ENCODE measurements at regions of chr1 and their contacts with region 1.

Region 1: DNA sequence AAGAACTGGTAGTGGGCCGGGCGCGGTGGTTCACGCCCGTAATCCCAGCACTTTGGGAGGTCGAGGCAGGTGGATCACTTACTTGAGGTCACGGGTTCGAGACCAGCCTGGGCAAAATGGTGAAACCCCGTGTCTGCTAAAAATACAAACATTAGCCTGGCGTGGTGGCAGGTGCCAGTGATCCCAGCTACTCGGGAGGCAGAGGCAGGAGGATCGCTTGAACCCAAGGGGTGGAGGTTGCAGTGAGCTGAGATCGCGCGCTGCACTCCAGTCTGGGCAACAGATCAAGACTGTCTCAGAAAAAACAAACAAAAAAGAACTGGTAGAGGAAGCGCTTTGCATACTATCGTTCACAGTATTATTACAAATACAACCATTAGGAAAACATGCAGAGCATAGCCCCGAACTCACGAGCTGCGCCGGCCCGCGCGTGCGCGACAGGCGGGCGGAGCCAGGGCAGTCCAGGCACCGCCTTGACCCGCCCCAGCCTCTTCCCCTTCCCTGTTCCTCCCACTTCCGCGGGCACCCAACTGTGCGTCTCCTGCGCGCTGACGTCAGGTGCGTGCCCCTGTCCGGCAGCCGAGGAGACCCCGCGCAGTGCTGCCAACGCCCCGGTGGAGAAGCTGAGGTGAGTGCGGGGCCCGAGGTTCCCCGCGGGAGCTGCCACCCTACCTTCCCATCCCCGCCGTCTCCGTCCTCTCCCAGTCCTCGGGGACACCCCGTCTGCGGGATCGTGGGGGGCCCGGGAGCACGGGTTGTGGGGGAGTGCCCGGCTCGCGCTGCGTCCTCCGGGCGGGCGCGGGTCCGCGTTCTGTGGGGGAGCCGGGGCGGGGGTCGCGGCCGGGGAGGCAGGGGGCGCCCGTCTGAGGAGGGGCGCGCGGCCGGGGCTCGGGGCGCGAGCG is at the start of gene CDC42:
- DNase-seq: peak; percentile 80 to 97
- H3K4me3 ChIP-seq: peak within 1 kb of the TSS; percentile 90
- H3K27ac ChIP-seq: peak within 1 kb of the TSS; percentile 79
- H3K4me1 ChIP-seq: peaks cover 20% of the 10 kb centered on the region
- H3K27me3 ChIP-seq: no peaks in the 10 kb centered on the region
- CTCF ChIP-seq: no peak
- total RNA-seq, gene CDC42: 119 and 183 TPM in 2 replicates

Region 2: DNA sequence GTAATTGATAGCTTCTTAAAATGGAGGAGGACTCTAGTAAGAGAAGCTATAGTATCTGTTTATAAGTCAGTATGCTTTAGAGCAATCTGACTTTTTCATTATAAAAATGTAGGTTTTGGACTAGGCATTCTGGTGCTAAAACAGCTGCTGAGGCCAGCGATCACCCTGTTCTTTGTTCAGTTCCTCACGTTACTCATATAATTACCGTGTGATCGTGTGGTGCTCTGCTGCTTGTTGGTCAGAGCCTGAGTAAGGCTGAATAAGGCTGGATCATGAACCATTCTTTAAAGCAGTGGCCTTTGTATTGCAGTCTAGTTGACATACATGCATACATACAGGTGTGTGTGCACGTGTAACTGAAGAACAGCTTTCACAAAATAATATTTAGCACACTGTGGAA is 25.4 kb after region 1 on chr1:
- CTCF ChIA-PET with region 1: interaction called, 11 read pairs
- POLR2A ChIA-PET with region 1: no interaction called
- intact Hi-C with region 1: no loop called
- DNase-seq: no peak
- H3K4me3 ChIP-seq: no peak overlapping the region
- H3K27ac ChIP-seq: no peak overlapping the region
- H3K4me1 ChIP-seq: no peaks in the 10 kb centered on the region
- H3K27me3 ChIP-seq: no peaks in the 10 kb centered on the region
- CTCF ChIP-seq: no peak

Region 3: DNA sequence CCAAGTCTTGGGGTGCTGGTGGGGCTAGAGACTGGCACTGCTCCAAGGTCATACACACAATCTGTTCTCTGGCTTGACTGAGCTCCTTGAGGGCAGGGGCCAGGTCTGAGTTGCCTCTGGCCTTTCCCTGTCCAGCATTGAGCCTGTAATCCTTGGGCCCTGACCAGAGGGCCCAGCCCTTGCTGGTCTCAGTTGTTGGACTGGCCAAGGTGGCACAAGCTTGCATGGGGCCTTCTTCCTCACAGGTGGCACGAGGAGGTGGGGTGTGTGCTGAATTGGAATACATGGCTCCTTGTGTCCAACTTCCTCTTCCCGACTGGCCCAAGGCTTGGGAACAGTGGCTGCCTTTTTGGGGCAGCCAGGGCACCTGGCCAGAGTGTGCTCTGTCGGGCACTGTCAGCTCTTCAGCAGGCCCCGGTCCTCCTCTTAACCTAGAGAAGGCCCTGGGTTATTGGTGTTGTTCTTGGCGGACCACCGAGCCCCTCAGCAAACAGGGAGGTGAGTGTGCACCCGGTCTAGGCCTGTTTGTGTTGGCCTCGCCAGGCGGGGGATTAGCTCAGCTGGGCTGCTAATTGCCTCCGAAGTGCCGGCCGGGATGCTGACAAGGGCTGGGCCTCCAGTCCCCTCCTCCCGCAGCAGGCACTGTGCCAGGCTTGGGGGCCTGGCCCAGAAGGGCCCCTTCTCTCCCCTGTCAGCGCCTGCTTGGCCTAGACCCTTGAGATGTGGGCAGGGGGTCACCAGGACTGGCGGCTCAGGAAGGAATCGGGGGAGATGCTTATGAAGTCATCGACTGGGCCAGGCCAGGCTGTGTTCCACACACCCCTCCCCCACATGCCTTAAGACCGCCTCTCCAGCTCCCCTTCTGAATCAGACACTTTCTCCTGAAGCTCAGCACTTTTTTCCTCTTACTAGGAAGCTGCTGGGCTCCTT is 62.0 kb after region 1 on chr1:
- CTCF ChIA-PET with region 1: no interaction called
- POLR2A ChIA-PET with region 1: no interaction called
- intact Hi-C with region 1: no loop called
- DNase-seq: no peak
- H3K4me3 ChIP-seq: no peak overlapping the region
- H3K27ac ChIP-seq: no peak overlapping the region
- H3K4me1 ChIP-seq: no peaks in the 10 kb centered on the region
- H3K27me3 ChIP-seq: no peaks in the 10 kb centered on the region
- CTCF ChIP-seq: no peak

Region 4: DNA sequence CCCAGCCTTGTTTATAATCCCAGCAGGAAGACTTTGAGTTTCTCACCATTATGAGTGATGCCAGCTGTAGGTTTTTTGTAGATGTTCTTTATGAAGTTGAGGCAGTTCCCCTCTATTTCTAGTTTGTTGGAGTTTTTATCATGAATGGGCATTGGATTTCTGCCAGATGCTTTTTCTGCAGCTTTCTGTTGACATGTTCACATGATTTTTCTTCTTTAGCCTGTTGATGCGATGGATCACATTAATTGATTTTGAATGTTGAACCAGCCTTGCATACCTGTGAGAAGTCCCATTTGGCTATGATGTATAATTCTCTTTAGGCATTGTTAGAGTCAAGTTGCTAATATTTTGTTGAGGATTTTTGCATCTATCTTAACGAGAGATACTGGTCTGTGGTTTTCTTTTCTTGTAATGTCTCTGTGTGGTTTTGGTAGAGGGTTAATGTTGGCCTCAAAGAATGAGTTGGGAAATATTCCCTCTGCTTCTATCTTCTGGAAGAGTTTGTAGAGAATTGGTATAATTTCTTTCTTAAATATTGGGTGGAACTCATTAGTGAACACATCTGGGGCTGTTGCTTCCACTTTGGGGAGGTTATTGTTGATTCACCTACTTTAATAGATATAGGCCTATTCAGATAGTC is 432.5 kb after region 1 on chr1:
- CTCF ChIA-PET with region 1: no interaction called
- POLR2A ChIA-PET with region 1: no interaction called
- intact Hi-C with region 1: no loop called
- DNase-seq: no peak
- H3K4me3 ChIP-seq: no peak overlapping the region
- H3K27ac ChIP-seq: no peak overlapping the region
- H3K4me1 ChIP-seq: no peaks in the 10 kb centered on the region
- H3K27me3 ChIP-seq: no peaks in the 10 kb centered on the region
- CTCF ChIP-seq: no peak

Region 5: GRCh38 chr1:22903113-22903512 is 850.7 kb after region 1 on chr1:
- CTCF ChIA-PET with region 1: no interaction called
- POLR2A ChIA-PET with region 1: no interaction called
- intact Hi-C with region 1: no loop called
- DNase-seq: no peak
- H3K4me3 ChIP-seq: no peak overlapping the region
- H3K27ac ChIP-seq: no peak overlapping the region
- H3K4me1 ChIP-seq: no peaks in the 10 kb centered on the region
- H3K27me3 ChIP-seq: no peaks in the 10 kb centered on the region
- CTCF ChIP-seq: no peak